ENCODE measurements at regions of chr2 and their contacts with region 1.

Region 1: GRCh38 chr2:10832203-10832936 is 19.8 kb upstream of the PDIA6 start:
- DNase-seq: peak; percentile 86
- H3K4me3 ChIP-seq: no peak overlapping the region
- H3K27ac ChIP-seq: no peak overlapping the region
- H3K4me1 ChIP-seq: no peaks in the 10 kb centered on the region
- H3K27me3 ChIP-seq: peaks cover 2% of the 10 kb centered on the region
- CTCF ChIP-seq: peak; percentile 98

Region 2: DNA sequence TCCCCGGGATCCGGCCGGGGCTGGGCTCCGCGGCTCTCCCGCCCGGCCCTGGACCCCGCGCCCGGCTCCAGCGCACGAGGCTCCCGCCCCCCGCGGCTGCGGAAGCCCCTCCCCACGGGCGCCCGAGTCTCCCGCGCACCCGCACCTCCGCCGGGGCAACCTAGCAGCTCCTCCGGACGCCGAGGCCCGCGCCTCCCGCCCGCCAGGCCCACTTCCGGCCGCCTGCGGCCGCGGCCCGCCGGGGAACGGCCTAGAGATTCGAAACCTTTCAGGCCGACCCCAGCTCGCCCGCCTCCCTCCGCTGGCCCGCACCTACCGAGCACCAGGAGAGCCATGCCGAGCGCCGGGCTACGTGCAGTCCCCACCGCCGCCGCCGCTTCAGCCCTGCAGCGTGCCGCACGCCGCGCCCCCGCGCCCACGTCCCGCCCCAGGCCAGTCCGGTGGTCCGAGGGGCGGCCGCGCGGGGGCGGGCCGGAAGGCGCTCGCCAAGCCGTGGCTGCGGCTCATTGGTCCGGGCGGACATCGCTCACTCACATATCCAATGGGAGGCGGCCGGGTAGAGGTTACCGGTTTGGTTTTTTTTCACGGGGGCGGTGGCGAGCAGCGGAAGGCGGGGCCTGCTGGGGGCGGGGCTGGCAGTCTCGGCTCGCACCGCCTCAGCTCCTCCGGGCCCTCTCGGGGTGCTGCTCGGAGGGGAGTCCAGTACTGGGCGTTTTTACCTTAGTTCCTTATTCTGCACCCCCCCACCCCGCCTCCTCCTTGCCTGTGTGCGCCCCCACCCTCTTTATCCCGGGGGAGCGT is 19.8 kb before region 1 on chr2 and contains the start of gene PDIA6:
- CTCF ChIA-PET with region 1: interaction called, 12 read pairs
- POLR2A ChIA-PET with region 1: no interaction called
- intact Hi-C with region 1: no loop called
- DNase-seq: peak; percentile 97
- H3K4me3 ChIP-seq: peak within 1 kb of the TSS; percentile 98
- H3K27ac ChIP-seq: peak within 1 kb of the TSS; percentile 97
- H3K4me1 ChIP-seq: peaks cover 21% of the 10 kb centered on the region
- H3K27me3 ChIP-seq: no peaks in the 10 kb centered on the region
- CTCF ChIP-seq: no peak
- total RNA-seq, gene PDIA6: 314 and 316 TPM in 2 replicates

Region 3: DNA sequence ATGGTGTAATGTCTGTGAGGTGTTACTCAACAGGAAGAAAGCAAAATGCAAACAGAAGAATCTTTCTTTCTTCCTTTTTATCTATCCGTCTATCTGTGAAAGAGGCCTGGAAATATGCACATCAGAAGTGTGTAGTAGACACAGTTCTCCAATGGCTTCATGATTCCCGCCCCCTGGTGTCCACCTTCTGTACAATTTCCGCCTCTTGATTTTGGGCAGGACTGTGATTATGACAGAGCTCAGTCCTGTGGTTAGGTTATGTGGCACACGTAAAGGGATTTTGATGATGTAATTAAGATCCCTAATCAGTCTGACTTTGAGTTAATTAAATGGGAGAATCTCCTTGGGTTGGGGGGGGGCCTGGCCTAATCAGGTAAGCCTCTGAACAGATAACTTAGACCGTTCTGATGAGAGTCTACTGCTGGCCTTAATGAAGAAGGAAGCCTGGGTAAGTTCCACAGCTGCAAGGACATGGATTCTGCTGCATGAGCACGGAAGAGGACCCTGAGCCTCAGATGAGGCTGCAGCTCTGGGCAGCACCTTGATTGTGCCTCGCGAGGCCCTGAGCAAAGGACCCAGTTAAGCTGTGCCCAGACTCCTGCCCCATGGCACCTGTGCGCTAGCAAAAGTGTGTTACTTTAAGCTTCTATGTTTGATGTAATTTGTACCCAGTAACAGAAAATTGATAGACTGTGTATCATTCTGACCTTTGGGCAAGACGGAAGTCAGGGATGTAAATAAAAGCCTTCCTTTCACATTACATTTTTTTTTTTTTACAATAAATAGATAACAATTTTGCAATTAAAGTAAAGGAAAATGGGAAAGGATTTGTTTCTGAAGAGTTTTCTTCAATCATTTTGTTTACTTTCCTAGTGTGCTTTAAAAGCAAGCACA is 68.1 kb after region 1 on chr2:
- CTCF ChIA-PET with region 1: interaction called, 11 read pairs
- POLR2A ChIA-PET with region 1: no interaction called
- intact Hi-C with region 1: loop called (anchors 1 kb)
- DNase-seq: peak; percentile 75
- H3K4me3 ChIP-seq: no peak overlapping the region
- H3K27ac ChIP-seq: no peak overlapping the region
- H3K4me1 ChIP-seq: no peaks in the 10 kb centered on the region
- H3K27me3 ChIP-seq: no peaks in the 10 kb centered on the region
- CTCF ChIP-seq: peak; percentile 64

Region 4: DNA sequence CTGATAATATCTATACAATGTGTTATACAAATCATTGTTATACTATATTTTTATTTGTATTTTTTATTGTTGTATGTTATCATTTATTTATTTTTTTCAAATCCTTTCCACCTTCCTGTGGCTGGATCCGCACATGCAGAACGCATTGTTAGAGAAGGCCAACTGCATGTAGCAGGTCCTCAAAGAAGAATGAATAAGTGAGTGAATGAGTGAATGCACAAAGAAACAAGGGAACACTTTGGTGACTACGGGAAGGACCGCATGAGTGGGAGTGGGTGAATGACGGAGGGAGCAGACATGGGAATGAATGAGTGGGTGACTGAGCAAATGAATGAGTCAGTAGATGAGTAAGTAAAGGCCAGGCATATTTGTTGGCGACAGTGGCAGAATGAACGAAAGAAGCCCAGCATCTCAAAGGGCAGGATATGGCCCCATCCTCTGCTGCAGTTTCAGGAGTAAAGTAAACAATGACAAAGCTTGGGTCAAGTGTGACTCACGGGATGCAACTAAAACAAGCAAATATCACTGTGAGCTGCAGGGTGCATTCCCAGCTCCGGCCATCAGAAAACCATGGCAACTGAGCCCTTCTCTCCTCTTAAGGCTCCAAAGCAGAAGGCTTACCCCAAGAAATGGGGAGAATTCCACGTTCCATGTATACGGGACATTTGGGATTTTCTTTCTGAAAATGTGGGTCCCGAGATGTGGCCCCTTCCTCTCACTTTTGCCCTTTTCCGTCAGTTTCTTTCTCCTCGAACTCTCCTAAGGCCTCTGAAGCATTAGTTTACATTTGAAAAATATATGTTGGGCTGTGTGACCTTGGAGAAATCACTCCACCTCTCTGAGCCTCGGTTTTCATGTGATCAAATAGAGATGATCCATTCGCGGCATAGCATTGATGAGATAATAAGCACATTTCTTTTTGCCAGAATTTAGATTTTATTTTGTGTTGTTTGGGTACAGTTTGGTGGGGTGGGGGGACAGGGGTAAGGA is 103.9 kb after region 1 on chr2:
- CTCF ChIA-PET with region 1: no interaction called
- POLR2A ChIA-PET with region 1: no interaction called
- intact Hi-C with region 1: no loop called
- DNase-seq: no peak
- H3K4me3 ChIP-seq: no peak overlapping the region
- H3K27ac ChIP-seq: no peak overlapping the region
- H3K4me1 ChIP-seq: no peaks in the 10 kb centered on the region
- H3K27me3 ChIP-seq: no peaks in the 10 kb centered on the region
- CTCF ChIP-seq: no peak

Region 5: DNA sequence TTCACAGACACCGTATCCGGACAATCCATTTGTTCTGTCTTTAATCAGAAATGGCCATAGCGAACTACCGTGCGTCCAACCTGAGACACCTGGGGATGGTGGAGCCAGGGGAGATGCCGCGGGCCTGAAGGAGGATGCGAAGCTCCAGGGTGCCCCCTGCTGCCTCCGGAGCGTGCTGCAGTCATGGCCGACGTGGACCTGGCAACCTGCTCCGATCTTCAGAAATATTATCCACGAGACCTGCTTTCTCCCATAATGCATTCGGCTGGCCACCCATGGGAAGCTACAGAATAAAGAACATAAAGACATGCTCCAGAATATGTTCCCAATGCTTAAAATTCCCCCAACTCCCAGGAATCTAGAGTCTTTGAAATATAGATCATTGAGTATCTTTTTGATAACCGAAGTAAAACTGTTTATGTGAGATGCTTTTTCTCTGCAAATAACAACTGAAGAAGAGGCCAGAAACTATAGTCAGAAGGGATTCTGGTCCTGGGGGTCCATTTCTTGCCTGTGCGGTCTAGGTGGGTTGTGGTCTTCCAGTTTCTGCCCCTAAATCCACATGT is 292.2 kb after region 1 on chr2:
- CTCF ChIA-PET with region 1: interaction called, 35 read pairs
- POLR2A ChIA-PET with region 1: no interaction called
- intact Hi-C with region 1: loop called (anchors 1 kb)
- DNase-seq: peak; percentile 63
- H3K4me3 ChIP-seq: no peak overlapping the region
- H3K27ac ChIP-seq: no peak overlapping the region
- H3K4me1 ChIP-seq: peaks cover 4% of the 10 kb centered on the region
- H3K27me3 ChIP-seq: no peaks in the 10 kb centered on the region
- CTCF ChIP-seq: peak; percentile 92

Region 6: DNA sequence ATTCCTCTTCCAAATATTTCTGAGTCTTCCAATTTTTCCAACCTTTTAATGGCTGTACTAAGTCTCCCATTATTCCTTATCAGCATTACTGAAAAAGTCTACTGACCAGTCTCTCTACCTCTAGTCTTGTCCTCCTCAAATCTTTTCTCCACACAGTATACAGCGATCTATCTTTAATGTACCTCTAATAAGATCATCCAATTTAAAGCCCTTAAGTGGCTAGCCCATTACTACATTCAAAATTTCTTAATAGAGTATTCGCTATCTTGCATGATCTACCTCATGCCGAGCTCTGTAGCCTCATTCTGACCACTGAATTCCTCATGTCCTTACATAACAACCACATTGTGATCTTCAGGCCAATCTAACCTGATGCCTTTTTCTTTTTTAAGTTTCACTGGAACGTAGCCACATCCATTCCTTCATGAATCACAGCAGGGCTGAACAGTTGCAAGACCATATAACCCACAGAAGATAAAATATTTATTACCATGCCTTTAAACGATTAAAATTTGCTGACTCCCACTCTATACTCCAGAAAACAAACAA is 380.8 kb after region 1 on chr2:
- CTCF ChIA-PET with region 1: no interaction called
- POLR2A ChIA-PET with region 1: no interaction called
- intact Hi-C with region 1: no loop called
- DNase-seq: no peak
- H3K4me3 ChIP-seq: no peak overlapping the region
- H3K27ac ChIP-seq: no peak overlapping the region
- H3K4me1 ChIP-seq: no peaks in the 10 kb centered on the region
- H3K27me3 ChIP-seq: no peaks in the 10 kb centered on the region
- CTCF ChIP-seq: no peak

Region 7: DNA sequence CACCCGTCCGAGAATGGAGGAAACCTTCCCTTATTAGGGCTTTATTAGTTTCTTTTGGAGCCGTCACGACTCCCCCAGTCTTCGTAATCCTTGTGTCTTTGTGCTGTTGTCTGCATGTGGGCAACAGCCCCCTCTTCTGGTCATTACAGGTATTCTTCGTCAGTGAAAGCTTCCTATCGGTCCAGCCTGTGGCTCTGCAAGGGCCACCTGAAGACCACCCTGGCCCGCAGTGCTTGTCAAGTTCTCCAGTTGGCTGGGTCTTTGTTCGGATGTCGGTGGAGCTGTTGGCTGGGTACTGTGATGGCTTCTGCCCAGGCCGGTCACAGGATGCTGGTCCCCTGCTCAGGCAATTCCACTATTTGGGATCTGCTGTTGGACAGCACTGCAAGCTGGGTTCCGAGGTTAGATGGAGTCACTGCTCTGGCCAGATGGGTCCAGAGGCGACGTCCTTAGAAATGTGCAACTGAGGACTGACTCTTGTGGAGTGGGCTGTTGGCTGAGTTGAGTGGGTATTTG is 614.4 kb after region 1 on chr2:
- CTCF ChIA-PET with region 1: interaction called, 6 read pairs
- POLR2A ChIA-PET with region 1: no interaction called
- intact Hi-C with region 1: loop called (anchors 10 kb)
- DNase-seq: peak; percentile 80
- H3K4me3 ChIP-seq: no peak overlapping the region
- H3K27ac ChIP-seq: no peak overlapping the region
- H3K4me1 ChIP-seq: no peaks in the 10 kb centered on the region
- H3K27me3 ChIP-seq: no peaks in the 10 kb centered on the region
- CTCF ChIP-seq: peak; percentile 90